Activated CD4-positive, alpha-beta memory T cell treated with anti-CD3 and anti-CD28 coated beads for 36 hours (primary cell): ENCODE measurements at regions of chr6 and their contacts with region 1.

Region 1: DNA sequence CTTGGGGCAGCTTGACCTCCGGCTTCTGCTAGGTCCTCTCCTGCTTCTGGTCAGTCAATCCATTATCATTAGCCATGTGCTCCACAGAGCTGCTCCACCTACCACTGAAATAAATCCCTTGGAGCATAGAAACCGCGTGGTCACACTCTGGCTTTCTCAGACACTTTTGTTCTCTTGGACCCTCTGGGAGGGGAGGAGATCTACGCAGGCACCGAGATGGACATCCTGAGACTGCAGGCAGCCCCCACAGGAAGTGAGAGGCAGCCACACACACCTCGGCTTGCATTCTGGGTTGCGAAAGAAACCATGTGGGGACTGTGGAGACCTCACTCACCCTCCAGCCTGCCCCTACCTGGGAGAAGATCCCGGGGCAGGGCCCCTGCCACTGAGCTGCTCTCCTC is 79.5 kb downstream of the FYN start:
- DNase-seq: peak; percentile 75
- H3K4me3 Mint-ChIP-seq: peak overlapping the region; percentile 78
- H3K27ac Mint-ChIP-seq: peak overlapping the region; percentile 93
- H3K4me1 Mint-ChIP-seq: peaks cover 77% of the 10 kb centered on the region
- H3K27me3 Mint-ChIP-seq: no peaks in the 10 kb centered on the region

Region 2: GRCh38 chr6:111777357-111777756 is 16.4 kb before region 1 on chr6:
- CTCF ChIA-PET with region 1: interaction called, 4 read pairs
- POLR2A ChIA-PET with region 1: interaction called, 11 read pairs
- intact Hi-C with region 1: loop called (anchors 1 kb)
- DNase-seq: no peak
- H3K4me3 Mint-ChIP-seq: peak overlapping the region; percentile 41
- H3K27ac Mint-ChIP-seq: peak overlapping the region; percentile 81
- H3K4me1 Mint-ChIP-seq: peaks cover 88% of the 10 kb centered on the region
- H3K27me3 Mint-ChIP-seq: no peaks in the 10 kb centered on the region

Region 3: GRCh38 chr6:111812060-111813038 is 18.6 kb after region 1 on chr6:
- CTCF ChIA-PET with region 1: no interaction called
- POLR2A ChIA-PET with region 1: no interaction called
- intact Hi-C with region 1: loop called (anchors 2 kb)
- DNase-seq: peak; percentile 15
- H3K4me3 Mint-ChIP-seq: no peak overlapping the region
- H3K27ac Mint-ChIP-seq: peak overlapping the region; percentile 89
- H3K4me1 Mint-ChIP-seq: peaks cover 84% of the 10 kb centered on the region
- H3K27me3 Mint-ChIP-seq: no peaks in the 10 kb centered on the region

Region 4: GRCh38 chr6:111823831-111824607 is 30.3 kb after region 1 on chr6:
- CTCF ChIA-PET with region 1: interaction called, 3 read pairs
- POLR2A ChIA-PET with region 1: interaction called, 4 read pairs
- intact Hi-C with region 1: loop called (anchors 1 kb)
- DNase-seq: peak; percentile 44
- H3K4me3 Mint-ChIP-seq: peak overlapping the region; percentile 21
- H3K27ac Mint-ChIP-seq: peak overlapping the region; percentile 91
- H3K4me1 Mint-ChIP-seq: peaks cover 80% of the 10 kb centered on the region
- H3K27me3 Mint-ChIP-seq: no peaks in the 10 kb centered on the region

Region 5: GRCh38 chr6:111880181-111880888 is 86.6 kb after region 1 on chr6:
- CTCF ChIA-PET with region 1: no interaction called
- POLR2A ChIA-PET with region 1: no interaction called
- intact Hi-C with region 1: no loop called
- DNase-seq: no peak
- H3K4me3 Mint-ChIP-seq: no peak overlapping the region
- H3K27ac Mint-ChIP-seq: no peak overlapping the region
- H3K4me1 Mint-ChIP-seq: no peaks in the 10 kb centered on the region
- H3K27me3 Mint-ChIP-seq: no peaks in the 10 kb centered on the region

Region 6: GRCh38 chr6:112691289-112691688 is 897.6 kb after region 1 on chr6:
- CTCF ChIA-PET with region 1: no interaction called
- POLR2A ChIA-PET with region 1: no interaction called
- intact Hi-C with region 1: no loop called
- DNase-seq: no peak
- H3K4me3 Mint-ChIP-seq: no peak overlapping the region
- H3K27ac Mint-ChIP-seq: no peak overlapping the region
- H3K4me1 Mint-ChIP-seq: no peaks in the 10 kb centered on the region
- H3K27me3 Mint-ChIP-seq: no peaks in the 10 kb centered on the region